ENCODE measurements at regions of chr6 and their contacts with region 1.

Region 1: DNA sequence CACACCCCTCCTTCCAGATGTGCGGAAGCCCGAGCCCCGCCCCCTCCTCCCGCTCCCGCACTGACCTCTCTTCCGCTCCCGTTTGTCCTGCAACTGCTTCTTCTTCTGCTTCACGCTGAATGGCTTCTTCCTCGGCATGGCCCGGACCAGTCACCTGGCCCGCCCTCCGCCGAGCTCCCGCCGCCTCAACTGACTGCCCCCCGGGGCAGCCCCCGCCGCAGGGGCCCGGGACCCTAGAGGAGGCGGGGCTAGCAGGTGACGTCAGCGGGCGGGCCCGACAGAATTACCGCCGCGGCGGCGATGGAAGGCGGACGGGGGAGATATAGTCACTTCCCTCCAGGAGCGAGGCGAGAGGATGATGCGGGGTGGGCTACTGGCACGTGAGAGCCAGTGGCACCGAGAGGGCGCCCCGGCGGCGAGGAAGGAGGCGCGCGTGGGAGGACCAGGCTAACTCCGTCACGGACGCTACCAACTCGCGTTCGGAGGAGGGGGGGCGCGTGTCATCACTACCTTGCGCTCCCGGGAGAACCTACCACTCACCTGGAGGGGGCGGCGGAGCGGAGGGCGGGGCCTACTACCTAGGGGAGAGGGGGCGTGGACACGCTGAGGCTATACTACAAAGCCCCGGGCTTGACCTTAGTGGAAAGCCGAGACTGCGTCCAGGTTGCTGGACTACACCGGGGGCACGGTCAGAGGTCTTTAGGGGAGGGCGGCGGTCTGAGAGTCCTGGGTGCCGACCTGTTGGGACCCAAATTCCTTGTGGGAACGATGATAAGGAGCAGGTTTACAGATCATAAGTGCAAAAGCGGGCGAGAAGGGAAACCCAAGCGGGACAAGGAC is at the start of gene GNL1:
- DNase-seq: peak; percentile 97 to 100 (median 99)
- ATAC-seq: peak; percentile 90
- H3K4me3 ChIP-seq: peak within 1 kb of the TSS; percentile 75 to 92
- H3K4me3 Mint-ChIP-seq: peak within 1 kb of the TSS; percentile 95
- H3K27ac ChIP-seq: peak within 1 kb of the TSS; percentile 98 to 99
- H3K27ac Mint-ChIP-seq: peak within 1 kb of the TSS; percentile 99
- H3K4me1 ChIP-seq: peaks cover 25% of the 10 kb centered on the region
- H3K4me1 Mint-ChIP-seq: peaks cover 42% of the 10 kb centered on the region
- H3K27me3 ChIP-seq: no peaks in the 10 kb centered on the region
- H3K27me3 Mint-ChIP-seq: no peaks in the 10 kb centered on the region
- CTCF ChIP-seq: no peak
- total RNA-seq, gene GNL1: 148 to 159 TPM

Region 2: DNA sequence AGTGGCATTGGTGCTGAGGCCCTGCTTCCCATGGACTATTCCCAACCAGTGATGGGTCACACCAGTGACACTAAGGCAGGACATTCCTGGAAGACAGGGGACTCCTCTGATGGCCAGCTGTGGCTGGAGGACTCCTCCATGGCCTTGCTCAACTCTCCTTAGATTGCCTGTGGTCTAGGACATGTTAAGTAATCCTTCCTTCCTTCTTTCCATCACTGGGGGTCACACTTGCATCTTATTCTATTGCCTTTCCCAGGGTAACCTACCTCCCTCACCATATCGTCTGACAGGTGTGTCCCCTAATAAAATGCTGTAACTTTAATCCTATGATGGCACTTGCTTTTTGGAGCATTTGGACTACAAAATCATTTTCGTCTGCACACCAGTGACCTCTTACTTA is 638.4 kb before region 1 on chr6:
- CTCF ChIA-PET with region 1: no interaction called
- POLR2A ChIA-PET with region 1: no interaction called
- intact Hi-C with region 1: no loop called
- DNase-seq: peak in 2 of 9 experiments; percentile 24 to 29
- ATAC-seq: no peak
- H3K4me3 ChIP-seq: no peak overlapping the region
- H3K4me3 Mint-ChIP-seq: no peak overlapping the region
- H3K27ac ChIP-seq: no peak overlapping the region
- H3K27ac Mint-ChIP-seq: no peak overlapping the region
- H3K4me1 ChIP-seq: no peaks in the 10 kb centered on the region
- H3K4me1 Mint-ChIP-seq: no peaks in the 10 kb centered on the region
- H3K27me3 ChIP-seq: no peaks in the 10 kb centered on the region
- H3K27me3 Mint-ChIP-seq: peaks cover 6% of the 10 kb centered on the region
- CTCF ChIP-seq: no peak

Region 3: DNA sequence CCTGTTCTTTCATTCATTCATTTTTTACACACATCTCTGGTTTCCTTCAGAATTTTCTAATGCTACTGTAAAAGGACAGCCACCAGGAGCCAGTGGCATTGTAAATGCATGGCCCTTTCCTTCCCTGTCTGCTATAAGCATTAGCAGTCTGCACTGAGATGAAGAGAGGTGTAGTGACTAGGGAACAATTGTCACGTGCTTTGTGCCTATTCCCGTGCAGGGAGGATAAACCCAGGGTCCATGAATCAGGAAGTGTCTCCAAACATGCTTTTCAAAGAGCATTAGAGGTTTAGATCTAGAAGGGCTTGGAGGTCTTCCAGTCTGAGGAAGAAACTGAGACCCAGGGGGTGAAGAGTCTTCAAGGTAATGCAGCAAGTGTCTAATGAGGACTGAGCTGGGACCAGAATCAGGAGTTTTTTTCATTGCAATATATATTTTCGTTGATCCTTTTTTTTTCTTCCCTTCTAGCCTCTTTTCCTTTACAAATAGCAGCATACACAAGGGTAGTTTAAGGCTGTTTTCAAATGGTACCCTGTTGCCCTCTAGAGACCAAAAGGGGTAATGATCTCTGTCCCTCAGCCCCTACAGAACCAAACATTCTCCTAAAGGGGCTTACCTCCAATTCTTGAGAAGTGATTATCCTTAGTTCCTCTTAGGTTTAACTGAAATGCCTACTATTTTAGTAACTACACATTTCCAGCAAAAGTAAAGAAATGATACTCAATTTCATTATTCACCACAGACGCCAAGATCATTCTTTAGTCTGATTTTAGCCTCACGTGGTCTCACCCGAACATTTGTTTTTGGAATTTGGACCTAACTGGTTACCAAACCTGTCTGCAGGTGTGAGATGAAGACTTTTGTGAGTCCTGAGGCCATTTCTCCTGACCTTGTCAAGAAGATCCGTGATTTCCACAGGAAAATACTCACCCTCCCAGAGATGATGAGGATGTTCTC is 386.4 kb before region 1 on chr6:
- CTCF ChIA-PET with region 1: no interaction called
- POLR2A ChIA-PET with region 1: no interaction called
- intact Hi-C with region 1: no loop called
- DNase-seq: peak in 2 of 9 experiments; percentile 54 to 67
- ATAC-seq: peak; percentile 86
- H3K4me3 ChIP-seq: no peak overlapping the region
- H3K4me3 Mint-ChIP-seq: no peak overlapping the region
- H3K27ac ChIP-seq: no peak overlapping the region
- H3K27ac Mint-ChIP-seq: no peak overlapping the region
- H3K4me1 ChIP-seq: peaks cover 10% of the 10 kb centered on the region
- H3K4me1 Mint-ChIP-seq: peaks cover 5% of the 10 kb centered on the region
- H3K27me3 ChIP-seq: peaks cover 3 to 5% of the 10 kb centered on the region in 2 experiments
- H3K27me3 Mint-ChIP-seq: peaks cover 51% of the 10 kb centered on the region
- CTCF ChIP-seq: peak; percentile 83

Region 4: GRCh38 chr6:30212865-30213666 is 343.2 kb before region 1 on chr6 and contains the start of gene TRIM26:
- CTCF ChIA-PET with region 1: no interaction called
- POLR2A ChIA-PET with region 1: no interaction called
- intact Hi-C with region 1: loop called (anchors 5 kb)
- DNase-seq: peak; percentile 92 to 98 (median 96)
- ATAC-seq: peak; percentile 86
- H3K4me3 ChIP-seq: peak within 1 kb of the TSS; percentile 76 to 99
- H3K4me3 Mint-ChIP-seq: peak within 1 kb of the TSS; percentile 99
- H3K27ac ChIP-seq: peak within 1 kb of the TSS; percentile 96
- H3K27ac Mint-ChIP-seq: peak within 1 kb of the TSS; percentile 99
- H3K4me1 ChIP-seq: peaks cover 33% of the 10 kb centered on the region
- H3K4me1 Mint-ChIP-seq: peaks cover 63% of the 10 kb centered on the region
- H3K27me3 ChIP-seq: no peaks in the 10 kb centered on the region
- H3K27me3 Mint-ChIP-seq: no peaks in the 10 kb centered on the region
- CTCF ChIP-seq: no peak
- total RNA-seq, gene TRIM26: 54.8 to 56.8 TPM

Region 5: DNA sequence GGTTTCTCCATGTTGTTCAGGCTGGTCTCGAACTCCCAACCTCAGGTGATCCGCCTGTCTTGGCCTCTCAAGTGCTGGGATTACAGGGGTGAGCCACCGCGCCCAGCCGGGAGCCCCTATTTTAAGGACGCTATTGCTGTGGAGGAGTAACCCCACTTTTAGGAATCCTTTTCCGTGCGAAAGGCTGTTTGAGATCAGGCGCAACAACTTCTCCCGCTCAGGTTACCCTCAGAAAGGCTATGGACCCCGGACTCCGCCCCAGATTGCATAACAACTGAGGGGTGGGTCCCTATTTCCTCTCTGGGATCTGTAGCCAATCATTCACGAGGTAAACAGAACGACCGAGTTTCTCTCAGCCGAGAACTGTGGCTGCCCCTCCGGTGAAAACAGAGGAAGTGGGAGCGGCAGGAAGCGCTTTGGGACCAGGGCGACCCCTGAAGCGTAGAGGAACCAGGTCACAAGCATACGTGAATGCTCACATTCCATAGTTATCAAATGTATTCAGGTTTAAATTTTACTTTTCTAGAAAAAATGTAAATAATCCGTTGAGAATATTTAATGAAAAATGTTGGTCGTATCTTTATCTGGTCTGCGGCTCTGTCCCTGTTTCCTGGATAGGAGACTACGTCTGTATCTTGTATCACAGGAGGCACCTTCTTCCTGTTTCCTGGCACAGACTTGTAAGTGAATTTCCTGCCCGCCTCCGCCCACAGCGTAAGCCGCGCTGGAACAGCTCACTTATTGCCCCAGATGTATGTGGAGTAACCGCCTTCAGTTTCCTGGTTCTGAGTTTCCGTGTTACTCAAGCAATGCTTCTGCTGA is 40.1 kb before region 1 on chr6:
- CTCF ChIA-PET with region 1: no interaction called
- POLR2A ChIA-PET with region 1: interaction called, 8 read pairs
- intact Hi-C with region 1: loop called (anchors 1 kb)
- DNase-seq: peak; percentile 77 to 98 (median 90)
- ATAC-seq: peak; percentile 83
- H3K4me3 ChIP-seq: peak overlapping the region; percentile 36 to 43
- H3K4me3 Mint-ChIP-seq: peak overlapping the region; percentile 83
- H3K27ac ChIP-seq: peak overlapping the region; percentile 82 to 99
- H3K27ac Mint-ChIP-seq: peak overlapping the region; percentile 99
- H3K4me1 ChIP-seq: peaks cover 61% of the 10 kb centered on the region
- H3K4me1 Mint-ChIP-seq: peaks cover 63% of the 10 kb centered on the region
- H3K27me3 ChIP-seq: no peaks in the 10 kb centered on the region
- H3K27me3 Mint-ChIP-seq: no peaks in the 10 kb centered on the region
- CTCF ChIP-seq: no peak

Region 6: GRCh38 chr6:30646458-30647241 is 90.4 kb after region 1 on chr6 and contains the start of gene C6orf136:
- CTCF ChIA-PET with region 1: no interaction called
- POLR2A ChIA-PET with region 1: no interaction called
- intact Hi-C with region 1: loop called in 1 of 2 experiments (anchors 1 kb)
- DNase-seq: peak; percentile 84 to 98 (median 92)
- ATAC-seq: peak; percentile 83
- H3K4me3 ChIP-seq: peak within 1 kb of the TSS; percentile 91 to 93
- H3K4me3 Mint-ChIP-seq: peak within 1 kb of the TSS; percentile 86
- H3K27ac ChIP-seq: peak within 1 kb of the TSS; percentile 80 to 92
- H3K27ac Mint-ChIP-seq: peak within 1 kb of the TSS; percentile 92
- H3K4me1 ChIP-seq: peaks cover 20% of the 10 kb centered on the region
- H3K4me1 Mint-ChIP-seq: peaks cover 30% of the 10 kb centered on the region
- H3K27me3 ChIP-seq: no peaks in the 10 kb centered on the region
- H3K27me3 Mint-ChIP-seq: no peaks in the 10 kb centered on the region
- CTCF ChIP-seq: no peak
- total RNA-seq, gene C6orf136: 31.4 to 36.0 TPM

Region 7: DNA sequence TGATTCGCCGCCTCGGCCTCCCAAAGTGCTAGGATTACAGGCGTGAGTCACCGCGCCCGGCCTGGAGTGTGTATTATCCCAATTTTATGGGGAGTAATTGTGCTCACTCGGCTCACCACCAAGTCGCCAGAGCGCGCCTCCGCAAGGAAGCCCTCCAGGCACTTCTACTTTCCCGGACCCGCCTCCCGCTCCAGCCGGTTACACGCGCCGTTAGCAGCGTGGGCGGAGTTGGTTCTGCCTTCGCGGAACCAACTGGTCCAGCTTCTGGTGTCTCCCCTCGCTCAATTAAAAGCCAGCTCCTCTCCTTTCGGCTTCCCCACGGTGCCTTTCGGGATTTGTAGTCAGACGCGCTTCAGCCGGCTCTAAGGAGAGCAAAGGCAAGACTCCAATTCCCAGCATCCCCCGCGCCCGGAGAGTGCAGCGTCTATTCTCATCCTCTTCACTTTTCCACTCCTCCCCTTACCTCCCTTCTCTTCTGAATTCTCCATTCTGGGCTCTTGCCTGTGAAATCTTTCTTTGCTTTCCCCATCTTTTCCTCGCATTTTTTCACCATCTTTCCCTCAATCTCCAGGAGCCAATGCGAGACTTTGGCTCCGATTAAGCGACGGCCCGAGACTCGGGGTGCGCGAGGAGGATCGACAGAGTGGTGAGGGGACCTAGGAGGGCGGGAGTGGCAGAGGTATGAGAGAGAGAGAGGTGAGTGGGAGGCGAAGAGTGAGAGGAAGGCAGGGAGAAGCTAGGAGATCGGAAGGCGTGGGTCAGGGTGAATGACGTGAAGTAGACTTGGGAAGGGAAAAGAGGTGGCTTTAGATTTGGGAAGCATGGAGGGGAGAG is 351.7 kb after region 1 on chr6 and contains the start of gene GTF2H4:
- CTCF ChIA-PET with region 1: no interaction called
- POLR2A ChIA-PET with region 1: no interaction called
- intact Hi-C with region 1: loop called in 1 of 2 experiments (anchors 5 kb)
- DNase-seq: peak; percentile 89 to 97 (median 95)
- ATAC-seq: peak; percentile 99
- H3K4me3 ChIP-seq: peak within 1 kb of the TSS; percentile 84 to 94
- H3K4me3 Mint-ChIP-seq: peak within 1 kb of the TSS; percentile 100
- H3K27ac ChIP-seq: peak within 1 kb of the TSS; percentile 34 to 54
- H3K27ac Mint-ChIP-seq: peak within 1 kb of the TSS; percentile 83
- H3K4me1 ChIP-seq: peaks cover 11% of the 10 kb centered on the region
- H3K4me1 Mint-ChIP-seq: peaks cover 25% of the 10 kb centered on the region
- H3K27me3 ChIP-seq: no peaks in the 10 kb centered on the region
- H3K27me3 Mint-ChIP-seq: no peaks in the 10 kb centered on the region
- CTCF ChIP-seq: no peak
- total RNA-seq, gene GTF2H4: 7.0 to 7.5 TPM

Measured in CD8-positive, alpha-beta T cell (primary cell).